ENCODE measurements at regions of chr4 and their contacts with region 1.

Region 1: DNA sequence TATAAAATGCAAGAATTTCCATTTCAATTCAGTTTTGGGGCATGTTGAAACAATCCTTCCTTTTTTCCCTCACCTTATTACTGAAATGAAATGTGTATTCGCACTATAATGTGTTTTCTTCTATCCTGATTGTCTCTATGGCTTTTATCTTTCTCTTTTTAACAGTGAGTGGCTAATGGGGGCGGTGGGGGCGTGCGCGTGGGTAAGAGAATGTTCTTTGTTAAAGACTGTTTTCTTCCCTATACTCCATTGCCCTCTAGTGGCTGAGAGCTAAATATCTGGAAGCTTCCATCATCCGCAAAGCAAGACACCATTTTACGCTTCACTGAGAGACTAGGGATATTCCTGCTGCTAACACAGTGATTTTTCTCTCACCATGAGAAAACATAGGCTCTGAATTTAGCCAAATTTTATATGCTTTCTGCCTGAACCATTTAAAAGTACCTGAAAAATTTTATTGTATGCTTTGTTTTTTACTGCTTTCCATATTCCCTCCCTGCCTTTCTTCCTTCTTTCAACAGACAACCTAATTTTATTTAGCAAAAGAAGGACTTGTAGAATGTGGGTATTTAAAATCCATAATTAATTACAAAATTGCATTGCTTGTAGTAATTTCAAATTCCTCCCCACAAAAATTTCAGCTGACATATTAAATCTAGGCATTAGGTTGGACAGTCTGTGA is 194.0 kb downstream of the GASK1B start:
- DNase-seq: peak; percentile 82
- H3K4me3 ChIP-seq: peak overlapping the region in 2 of 3 experiments; percentile 18 to 75
- H3K27ac ChIP-seq: peak overlapping the region; percentile 44
- H3K4me1 ChIP-seq: peaks cover 29% of the 10 kb centered on the region
- H3K27me3 ChIP-seq: no peaks in the 10 kb centered on the region
- CTCF ChIP-seq: peak; percentile 61 to 67
- POLR2A ChIP-seq: no peak

Region 2: DNA sequence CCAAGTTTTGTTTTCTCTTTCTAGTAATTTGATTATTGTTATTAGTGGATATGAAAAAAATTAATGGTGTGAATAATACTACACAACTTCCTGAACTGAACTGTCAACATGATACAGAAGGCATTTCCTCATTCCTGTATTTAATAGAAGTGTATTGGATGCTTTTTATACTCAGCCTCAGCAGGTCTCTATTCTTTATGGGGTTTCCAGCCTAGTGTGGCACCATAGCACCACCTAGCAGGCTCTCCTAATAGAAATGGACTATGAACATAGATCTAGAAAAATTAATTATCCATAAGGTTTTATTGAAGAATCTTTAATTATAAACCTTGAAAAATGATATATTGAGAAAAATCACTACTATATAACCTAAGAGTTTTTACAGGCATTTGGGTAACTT is 850.4 kb before region 1 on chr4:
- CTCF ChIA-PET with region 1: no interaction called
- POLR2A ChIA-PET with region 1: no interaction called
- dilution Hi-C with region 1: no loop called
- intact Hi-C with region 1: loop called (anchors 5 kb)
- DNase-seq: peak; percentile 74
- H3K4me3 ChIP-seq: no peak overlapping the region
- H3K27ac ChIP-seq: no peak overlapping the region
- H3K4me1 ChIP-seq: no peaks in the 10 kb centered on the region
- H3K27me3 ChIP-seq: no peaks in the 10 kb centered on the region
- CTCF ChIP-seq: peak; percentile 20 to 33
- POLR2A ChIP-seq: no peak

Region 3: GRCh38 chr4:157291071-157291470 is 687.8 kb before region 1 on chr4:
- CTCF ChIA-PET with region 1: no interaction called
- POLR2A ChIA-PET with region 1: no interaction called
- dilution Hi-C with region 1: no loop called
- intact Hi-C with region 1: loop called (anchors 5 kb)
- DNase-seq: no peak
- H3K4me3 ChIP-seq: no peak overlapping the region
- H3K27ac ChIP-seq: no peak overlapping the region
- H3K4me1 ChIP-seq: no peaks in the 10 kb centered on the region
- H3K27me3 ChIP-seq: no peaks in the 10 kb centered on the region
- CTCF ChIP-seq: no peak
- POLR2A ChIP-seq: no peak

Region 4: DNA sequence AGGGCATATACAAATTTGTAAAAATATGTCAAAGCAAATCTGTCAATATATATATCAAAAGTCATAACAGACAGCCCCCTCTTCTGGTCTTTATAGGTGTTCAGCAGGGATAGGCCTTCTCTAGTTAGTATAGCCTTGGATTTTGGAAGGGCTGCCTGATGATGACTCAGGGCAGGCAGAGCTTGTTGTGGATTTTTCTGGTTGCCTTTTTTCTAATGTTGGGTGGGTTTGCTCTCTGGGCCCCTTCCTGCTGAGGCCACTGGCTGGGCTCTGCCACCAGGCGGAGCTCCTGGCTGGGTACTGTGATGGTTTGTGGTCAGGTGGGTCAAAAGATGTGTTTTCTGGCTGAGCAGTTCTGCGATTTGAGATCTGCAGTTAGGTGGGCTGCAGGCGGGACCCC is 464.1 kb before region 1 on chr4:
- CTCF ChIA-PET with region 1: interaction called, 36 read pairs
- POLR2A ChIA-PET with region 1: no interaction called
- dilution Hi-C with region 1: no loop called
- intact Hi-C with region 1: loop called (anchors 1 kb)
- DNase-seq: no peak
- H3K4me3 ChIP-seq: no peak overlapping the region
- H3K27ac ChIP-seq: no peak overlapping the region
- H3K4me1 ChIP-seq: no peaks in the 10 kb centered on the region
- H3K27me3 ChIP-seq: no peaks in the 10 kb centered on the region
- CTCF ChIP-seq: peak; percentile 38 to 57
- POLR2A ChIP-seq: no peak

Region 5: DNA sequence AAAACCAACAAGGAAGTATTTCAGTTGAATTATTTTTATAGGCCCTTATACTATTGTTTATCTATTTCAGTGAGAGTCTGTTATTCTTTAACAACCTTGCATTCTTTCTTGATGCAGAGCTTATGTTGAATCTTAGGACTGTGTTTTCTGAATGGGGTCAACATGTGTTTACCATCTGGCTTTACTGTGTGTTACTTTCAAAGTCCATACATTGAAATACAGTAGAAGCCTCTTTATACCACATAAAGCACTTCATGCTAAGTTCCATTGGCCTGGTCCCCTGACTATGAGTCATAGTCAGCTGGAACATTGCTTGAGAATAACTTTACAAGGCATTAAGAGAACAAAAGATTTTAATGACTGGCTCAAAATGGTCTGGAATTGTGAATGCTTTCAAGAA is 41.4 kb after region 1 on chr4:
- CTCF ChIA-PET with region 1: no interaction called
- POLR2A ChIA-PET with region 1: no interaction called
- dilution Hi-C with region 1: no loop called
- intact Hi-C with region 1: no loop called
- DNase-seq: peak; percentile 96
- H3K4me3 ChIP-seq: peak overlapping the region in 1 of 3 experiments; percentile 30
- H3K27ac ChIP-seq: peak overlapping the region; percentile 95
- H3K4me1 ChIP-seq: peaks cover 59% of the 10 kb centered on the region
- H3K27me3 ChIP-seq: no peaks in the 10 kb centered on the region
- CTCF ChIP-seq: no peak
- POLR2A ChIP-seq: no peak

Region 6: DNA sequence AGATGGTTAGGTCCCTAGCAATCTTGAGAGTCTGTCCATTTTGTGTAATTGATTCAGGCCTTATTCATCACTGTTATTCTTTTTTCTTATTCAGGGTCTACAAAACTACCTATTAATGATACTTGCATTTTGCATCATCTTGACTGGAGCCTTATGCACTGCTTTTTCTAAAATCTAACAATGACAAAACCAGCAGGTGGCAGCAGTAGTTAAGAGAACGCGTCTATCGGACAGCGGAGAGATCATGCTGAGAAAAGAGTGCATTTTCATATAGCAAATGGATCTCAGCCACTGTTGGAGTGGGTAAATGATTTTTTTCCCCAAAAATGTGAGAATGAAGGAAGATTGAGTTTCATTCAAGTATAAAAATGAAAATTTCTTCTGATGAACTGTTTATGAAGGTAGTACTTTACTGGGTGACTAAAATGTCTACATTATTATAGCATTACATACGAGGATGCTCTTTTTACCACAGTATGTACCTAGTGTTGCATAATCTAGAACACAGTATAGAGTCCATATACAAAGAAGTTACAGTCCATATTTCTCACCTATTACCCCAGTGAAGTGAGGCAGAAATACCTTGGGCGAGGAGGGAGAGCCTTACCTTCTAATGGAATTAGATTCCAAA is 274.6 kb after region 1 on chr4:
- CTCF ChIA-PET with region 1: interaction called, 3 read pairs
- POLR2A ChIA-PET with region 1: no interaction called
- dilution Hi-C with region 1: no loop called
- intact Hi-C with region 1: loop called (anchors 1 kb)
- DNase-seq: peak; percentile 71
- H3K4me3 ChIP-seq: no peak overlapping the region
- H3K27ac ChIP-seq: no peak overlapping the region
- H3K4me1 ChIP-seq: no peaks in the 10 kb centered on the region
- H3K27me3 ChIP-seq: no peaks in the 10 kb centered on the region
- CTCF ChIP-seq: peak; percentile 60
- POLR2A ChIP-seq: no peak

Region 7: DNA sequence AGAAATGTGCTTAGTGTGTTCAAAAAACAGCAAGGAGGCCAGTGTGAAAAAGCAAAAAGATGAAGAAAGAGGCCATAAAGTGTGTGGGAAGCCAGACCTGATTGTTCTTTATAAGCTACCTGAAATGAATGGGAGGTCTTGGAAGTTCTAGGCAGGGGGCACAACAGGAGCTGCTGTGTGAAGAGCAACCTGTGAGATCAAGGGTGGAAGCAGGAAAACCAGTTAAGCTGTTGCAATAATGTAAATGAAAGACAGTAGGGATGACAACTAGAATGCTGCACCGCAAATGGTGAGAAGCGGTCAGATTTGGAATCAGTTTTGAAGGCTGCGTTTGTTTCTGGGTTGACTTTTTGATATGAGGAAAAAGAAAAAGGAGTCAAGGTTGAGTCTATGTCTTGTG is 355.0 kb after region 1 on chr4:
- CTCF ChIA-PET with region 1: no interaction called
- POLR2A ChIA-PET with region 1: no interaction called
- dilution Hi-C with region 1: no loop called
- intact Hi-C with region 1: no loop called
- DNase-seq: no peak
- H3K4me3 ChIP-seq: no peak overlapping the region
- H3K27ac ChIP-seq: no peak overlapping the region
- H3K4me1 ChIP-seq: no peaks in the 10 kb centered on the region
- H3K27me3 ChIP-seq: no peaks in the 10 kb centered on the region
- CTCF ChIP-seq: no peak
- POLR2A ChIP-seq: no peak